ENCODE measurements at regions of chr12 and their contacts with region 1.

Region 1: GRCh38 chr12:114403011-114403689 is 2.8 kb downstream of the TBX5 start:
- DNase-seq: no peak
- ATAC-seq: no peak
- H3K4me3 ChIP-seq: no peak overlapping the region
- H3K4me3 Mint-ChIP-seq: no peak overlapping the region
- H3K27ac ChIP-seq: no peak overlapping the region
- H3K27ac Mint-ChIP-seq: peak overlapping the region in 1 of 9 donors; percentile 80
- H3K4me1 ChIP-seq: no peaks in the 10 kb centered on the region
- H3K4me1 Mint-ChIP-seq: peaks cover 1 to 9% (median 3%) of the 10 kb centered on the region in 7 donors
- H3K27me3 ChIP-seq: peaks cover 0 to 8% of the 10 kb centered on the region in 2 donors
- H3K27me3 Mint-ChIP-seq: peaks cover 80 to 97% (median 87%) of the 10 kb centered on the region in 5 donors

Region 2: GRCh38 chr12:113467502-113468364 is 935.4 kb before region 1 on chr12:
- CTCF ChIA-PET with region 1: no interaction called
- POLR2A ChIA-PET with region 1: no interaction called
- intact Hi-C with region 1: loop called in 1 of 2 experiments (anchors 5 kb)
- DNase-seq: no peak
- ATAC-seq: no peak
- H3K4me3 ChIP-seq: no peak overlapping the region
- H3K4me3 Mint-ChIP-seq: peak overlapping the region in 4 of 10 donors; percentile 16 to 59 (median 43)
- H3K27ac ChIP-seq: no peak overlapping the region
- H3K27ac Mint-ChIP-seq: peak overlapping the region in 1 of 9 donors; percentile 23
- H3K4me1 ChIP-seq: peaks cover 6 to 17% of the 10 kb centered on the region in 2 donors
- H3K4me1 Mint-ChIP-seq: peaks cover 10 to 32% (median 25%) of the 10 kb centered on the region in 7 donors
- H3K27me3 ChIP-seq: peaks cover 5% of the 10 kb centered on the region in 2 donors
- H3K27me3 Mint-ChIP-seq: peaks cover 50 to 84% (median 69%) of the 10 kb centered on the region in 5 donors

Region 3: DNA sequence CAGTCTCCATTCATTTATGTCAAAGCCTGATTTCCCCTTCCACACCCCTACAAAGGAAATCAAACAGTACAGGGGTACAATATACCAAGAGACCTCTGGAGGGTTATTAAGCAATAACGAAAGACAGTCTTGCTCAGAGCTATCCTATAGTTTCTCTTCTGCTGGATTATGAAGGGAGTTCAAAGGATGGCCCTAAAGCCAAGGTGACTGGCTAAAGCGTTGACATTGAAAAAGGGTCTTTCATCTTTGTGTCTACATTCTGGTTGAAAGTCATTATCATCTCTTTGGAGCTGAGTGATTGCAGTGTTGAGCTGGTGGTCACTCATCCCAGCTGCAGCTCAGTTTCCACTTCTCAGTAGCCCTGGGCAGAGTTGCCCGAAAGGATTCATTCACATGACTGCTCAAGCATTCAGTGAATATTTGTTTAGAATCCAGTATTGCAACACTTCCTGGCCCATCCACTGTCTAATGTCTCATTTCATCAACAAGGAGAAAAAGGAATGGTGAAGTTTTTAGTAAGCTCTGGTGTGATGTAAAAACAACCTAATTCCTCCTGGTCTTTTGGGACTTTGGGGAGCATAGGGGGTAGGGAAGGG is 22.0 kb after region 1 on chr12:
- CTCF ChIA-PET with region 1: no interaction called
- POLR2A ChIA-PET with region 1: no interaction called
- intact Hi-C with region 1: no loop called
- DNase-seq: no peak
- ATAC-seq: no peak
- H3K4me3 ChIP-seq: no peak overlapping the region
- H3K4me3 Mint-ChIP-seq: no peak overlapping the region
- H3K27ac ChIP-seq: no peak overlapping the region
- H3K27ac Mint-ChIP-seq: no peak overlapping the region
- H3K4me1 ChIP-seq: no peaks in the 10 kb centered on the region
- H3K4me1 Mint-ChIP-seq: no peaks in the 10 kb centered on the region
- H3K27me3 ChIP-seq: no peaks in the 10 kb centered on the region
- H3K27me3 Mint-ChIP-seq: peaks cover 0 to 24% (median 18%) of the 10 kb centered on the region in 5 donors

Region 4: GRCh38 chr12:114440270-114441038 is 37.3 kb after region 1 on chr12:
- CTCF ChIA-PET with region 1: no interaction called
- POLR2A ChIA-PET with region 1: no interaction called
- intact Hi-C with region 1: loop called in 1 of 2 experiments (anchors 2 kb)
- DNase-seq: no peak
- ATAC-seq: no peak
- H3K4me3 ChIP-seq: no peak overlapping the region
- H3K4me3 Mint-ChIP-seq: no peak overlapping the region
- H3K27ac ChIP-seq: no peak overlapping the region
- H3K27ac Mint-ChIP-seq: peak overlapping the region in 1 of 9 donors; percentile 46
- H3K4me1 ChIP-seq: no peaks in the 10 kb centered on the region
- H3K4me1 Mint-ChIP-seq: peaks cover 0 to 7% (median 0%) of the 10 kb centered on the region in 7 donors
- H3K27me3 ChIP-seq: peaks cover 0 to 3% of the 10 kb centered on the region in 2 donors
- H3K27me3 Mint-ChIP-seq: peaks cover 71 to 85% (median 82%) of the 10 kb centered on the region in 5 donors

Region 5: GRCh38 chr12:114668151-114668885 is 265.2 kb after region 1 on chr12:
- CTCF ChIA-PET with region 1: no interaction called
- POLR2A ChIA-PET with region 1: no interaction called
- intact Hi-C with region 1: loop called in 1 of 2 experiments (anchors 5 kb)
- DNase-seq: no peak
- ATAC-seq: no peak
- H3K4me3 ChIP-seq: no peak overlapping the region
- H3K4me3 Mint-ChIP-seq: no peak overlapping the region
- H3K27ac ChIP-seq: no peak overlapping the region
- H3K27ac Mint-ChIP-seq: peak overlapping the region in 1 of 9 donors; percentile 49
- H3K4me1 ChIP-seq: no peaks in the 10 kb centered on the region
- H3K4me1 Mint-ChIP-seq: peaks cover 0 to 13% (median 6%) of the 10 kb centered on the region in 7 donors
- H3K27me3 ChIP-seq: no peaks in the 10 kb centered on the region
- H3K27me3 Mint-ChIP-seq: peaks cover 61 to 91% (median 68%) of the 10 kb centered on the region in 5 donors

Region 6: GRCh38 chr12:114684098-114684869 is 281.1 kb after region 1 on chr12 and contains the start of gene TBX3:
- CTCF ChIA-PET with region 1: no interaction called
- POLR2A ChIA-PET with region 1: no interaction called
- intact Hi-C with region 1: loop called in 1 of 2 experiments (anchors 5 kb)
- DNase-seq: peak in 7 of 9 donors; percentile 24 to 58 (median 32)
- ATAC-seq: peak; percentile 67
- H3K4me3 ChIP-seq: peak within 1 kb of the TSS; percentile 50
- H3K4me3 Mint-ChIP-seq: peak within 1 kb of the TSS; percentile 81 to 94 (median 90)
- H3K27ac ChIP-seq: no peak within 1 kb of the TSS
- H3K27ac Mint-ChIP-seq: peak within 1 kb of the TSS in 6 of 9 donors; percentile 1 to 85 (median 65)
- H3K4me1 ChIP-seq: peaks cover 0 to 8% of the 10 kb centered on the region in 2 donors
- H3K4me1 Mint-ChIP-seq: peaks cover 13 to 54% (median 37%) of the 10 kb centered on the region in 7 donors
- H3K27me3 ChIP-seq: peaks cover 0 to 36% of the 10 kb centered on the region in 2 donors
- H3K27me3 Mint-ChIP-seq: peaks cover 85 to 95% (median 91%) of the 10 kb centered on the region in 5 donors
- total RNA-seq, gene TBX3: not detected